ENCODE measurements at regions of chr11 and their contacts with region 1.

Region 1: GRCh38 chr11:33606762-33607161 is 93.9 kb downstream of the C11orf91 start:
- DNase-seq: no peak
- H3K4me3 ChIP-seq: no peak overlapping the region
- H3K27ac ChIP-seq: no peak overlapping the region
- H3K4me1 ChIP-seq: no peaks in the 10 kb centered on the region
- H3K27me3 ChIP-seq: no peaks in the 10 kb centered on the region
- CTCF ChIP-seq: no peak
- POLR2A ChIP-seq: no peak

Region 2: GRCh38 chr11:32902089-32902816 is 704.5 kb before region 1 on chr11:
- CTCF ChIA-PET with region 1: no interaction called
- POLR2A ChIA-PET with region 1: no interaction called
- dilution Hi-C with region 1: no loop called
- intact Hi-C with region 1: no loop called
- DNase-seq: no peak
- H3K4me3 ChIP-seq: no peak overlapping the region
- H3K27ac ChIP-seq: no peak overlapping the region
- H3K4me1 ChIP-seq: no peaks in the 10 kb centered on the region
- H3K27me3 ChIP-seq: no peaks in the 10 kb centered on the region
- CTCF ChIP-seq: no peak
- POLR2A ChIP-seq: no peak

Region 3: GRCh38 chr11:33564856-33565453 is 41.8 kb before region 1 on chr11:
- CTCF ChIA-PET with region 1: interaction called, 3 read pairs
- POLR2A ChIA-PET with region 1: no interaction called
- dilution Hi-C with region 1: no loop called
- intact Hi-C with region 1: loop called (anchors 1 kb)
- DNase-seq: no peak
- H3K4me3 ChIP-seq: no peak overlapping the region
- H3K27ac ChIP-seq: no peak overlapping the region
- H3K4me1 ChIP-seq: no peaks in the 10 kb centered on the region
- H3K27me3 ChIP-seq: no peaks in the 10 kb centered on the region
- CTCF ChIP-seq: no peak
- POLR2A ChIP-seq: no peak

Region 4: DNA sequence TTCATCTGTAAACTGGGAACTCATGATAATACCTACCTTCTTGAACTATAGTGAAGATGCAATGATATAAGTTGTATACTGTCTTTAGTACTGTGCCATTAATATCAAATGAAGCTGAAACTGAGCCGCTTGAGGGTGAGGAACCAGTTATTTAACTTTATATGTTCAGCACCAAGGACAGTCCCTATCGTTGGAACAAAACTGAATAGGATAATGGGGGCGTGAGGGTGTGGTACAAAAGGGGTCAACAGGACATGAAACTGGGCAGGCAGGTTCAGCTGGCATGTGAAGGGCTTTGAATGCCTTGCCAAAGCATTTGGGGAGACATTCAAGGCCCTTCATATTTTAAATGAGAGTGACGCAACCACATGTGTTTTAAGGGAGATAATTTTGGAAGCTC is 18.7 kb before region 1 on chr11:
- CTCF ChIA-PET with region 1: no interaction called
- POLR2A ChIA-PET with region 1: no interaction called
- dilution Hi-C with region 1: no loop called
- intact Hi-C with region 1: no loop called
- DNase-seq: no peak
- H3K4me3 ChIP-seq: no peak overlapping the region
- H3K27ac ChIP-seq: no peak overlapping the region
- H3K4me1 ChIP-seq: no peaks in the 10 kb centered on the region
- H3K27me3 ChIP-seq: no peaks in the 10 kb centered on the region
- CTCF ChIP-seq: no peak
- POLR2A ChIP-seq: no peak